Activated CD4-positive, alpha-beta T cell treated with anti-CD3 and anti-CD28 coated beads, Interleukin-2, amount 10 ng/mL, durations not matched to agents 24 days and 14 days (primary cell): ENCODE measurements at regions of chr17 and their contacts with region 1.

Region 1: GRCh38 chr17:41403798-41404671 is 6.6 kb upstream of the KRT31 start:
- DNase-seq: peak; percentile 72
- H3K4me3 Mint-ChIP-seq: peak overlapping the region; percentile 59
- H3K27ac Mint-ChIP-seq: peak overlapping the region; percentile 84
- H3K4me1 Mint-ChIP-seq: peaks cover 25% of the 10 kb centered on the region
- H3K27me3 Mint-ChIP-seq: no peaks in the 10 kb centered on the region

Region 2: GRCh38 chr17:41340934-41341861 is 62.8 kb before region 1 on chr17:
- intact Hi-C with region 1: loop called (anchors 1 kb)
- DNase-seq: peak; percentile 89
- H3K4me3 Mint-ChIP-seq: peak overlapping the region; percentile 45
- H3K27ac Mint-ChIP-seq: peak overlapping the region; percentile 82
- H3K4me1 Mint-ChIP-seq: peaks cover 36% of the 10 kb centered on the region
- H3K27me3 Mint-ChIP-seq: peaks cover 10% of the 10 kb centered on the region

Region 3: GRCh38 chr17:41442739-41443138 is 38.7 kb after region 1 on chr17:
- intact Hi-C with region 1: no loop called
- DNase-seq: no peak
- H3K4me3 Mint-ChIP-seq: no peak overlapping the region
- H3K27ac Mint-ChIP-seq: no peak overlapping the region
- H3K4me1 Mint-ChIP-seq: peaks cover 1% of the 10 kb centered on the region
- H3K27me3 Mint-ChIP-seq: peaks cover 12% of the 10 kb centered on the region

Region 4: DNA sequence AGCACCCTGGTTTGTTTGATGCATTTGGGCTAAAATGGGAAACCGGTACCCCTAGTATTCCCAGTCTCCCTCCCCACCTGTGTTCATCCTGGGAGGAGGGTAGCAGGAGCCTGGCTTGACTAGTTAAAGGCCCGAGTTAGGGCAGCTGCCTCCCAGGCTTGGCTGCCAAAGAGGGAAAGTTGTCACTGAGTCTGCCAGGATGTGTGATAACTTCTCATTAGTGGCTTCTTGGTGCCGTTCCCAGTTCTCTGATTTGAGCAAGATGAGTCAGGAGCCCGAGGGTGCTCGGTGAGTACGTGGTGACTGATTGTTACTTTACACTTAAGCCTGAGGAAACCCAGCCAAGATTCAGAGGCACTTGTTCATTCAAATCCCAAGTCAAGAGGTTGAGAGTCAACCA is 60.6 kb after region 1 on chr17:
- intact Hi-C with region 1: no loop called
- DNase-seq: no peak
- H3K4me3 Mint-ChIP-seq: no peak overlapping the region
- H3K27ac Mint-ChIP-seq: no peak overlapping the region
- H3K4me1 Mint-ChIP-seq: no peaks in the 10 kb centered on the region
- H3K27me3 Mint-ChIP-seq: peaks cover 5% of the 10 kb centered on the region